ENCODE measurements at regions of chr19 and their contacts with region 1.

Region 1: GRCh38 chr19:49148784-49149651 is 6.2 kb downstream of the HRC start:
- H3K4me3 ChIP-seq: peak overlapping the region; percentile 69
- H3K27ac ChIP-seq: peak overlapping the region; percentile 70
- H3K4me1 ChIP-seq: peaks cover 6% of the 10 kb centered on the region
- CTCF ChIP-seq: no peak

Region 2: GRCh38 chr19:48982280-48982679 is 166.7 kb before region 1 on chr19:
- CTCF ChIA-PET with region 1: no interaction called
- POLR2A ChIA-PET with region 1: no interaction called
- H3K4me3 ChIP-seq: no peak overlapping the region
- H3K27ac ChIP-seq: no peak overlapping the region
- H3K4me1 ChIP-seq: no peaks in the 10 kb centered on the region
- CTCF ChIP-seq: no peak

Region 3: GRCh38 chr19:49106648-49107135 is 42.3 kb before region 1 on chr19:
- CTCF ChIA-PET with region 1: interaction called, 10 read pairs
- POLR2A ChIA-PET with region 1: interaction called, 5 read pairs
- H3K4me3 ChIP-seq: no peak overlapping the region
- H3K27ac ChIP-seq: no peak overlapping the region; the same call in 1 of the 2 replicates
- H3K4me1 ChIP-seq: no peaks in the 10 kb centered on the region
- CTCF ChIP-seq: peak; percentile 81

Region 4: DNA sequence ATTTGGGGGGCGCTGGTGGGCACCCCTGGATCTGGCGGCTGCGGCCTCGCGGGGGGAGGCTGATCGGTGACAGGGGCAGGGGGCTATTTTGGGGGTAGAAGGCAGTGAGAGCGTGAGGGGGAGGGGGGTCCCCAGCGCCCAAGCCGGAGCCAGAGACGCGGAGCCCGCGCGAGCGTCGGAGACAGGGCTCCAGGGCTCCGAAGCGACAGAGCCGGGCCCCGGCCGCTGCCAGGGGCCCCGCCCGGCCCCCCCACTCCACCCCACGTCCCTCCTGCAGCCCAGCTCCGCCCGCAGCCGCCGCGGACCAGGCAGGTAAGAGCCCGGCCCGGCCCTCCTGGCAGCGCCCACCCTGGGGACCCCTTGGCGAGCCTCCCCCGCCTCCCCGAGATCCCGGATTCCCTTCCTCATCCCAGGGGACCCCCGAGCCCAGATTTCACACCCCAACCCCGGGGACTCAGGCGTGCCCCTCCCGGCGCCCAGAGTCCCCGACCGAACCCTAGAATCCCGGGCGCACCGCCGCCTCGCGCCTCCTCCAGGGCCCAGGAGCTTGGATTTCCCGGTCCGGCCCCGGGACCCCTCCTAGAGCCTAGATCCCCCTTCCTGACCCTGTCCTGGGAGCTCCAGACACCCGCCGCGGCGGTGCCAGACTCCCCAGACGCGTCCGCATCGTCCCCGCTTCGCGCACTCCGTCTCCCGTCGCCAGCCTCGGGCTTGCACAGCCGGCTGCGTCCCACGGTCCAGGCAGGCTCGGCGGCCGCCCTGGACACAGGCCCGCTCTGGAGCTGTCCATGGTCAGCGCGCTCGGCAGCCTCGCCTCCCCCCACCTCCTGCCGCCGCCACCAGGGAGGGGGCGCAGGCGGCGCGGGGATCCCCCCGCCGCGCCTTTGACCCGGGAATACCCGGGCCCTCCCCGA is 29.4 kb before region 1 on chr19 and contains the start of gene PPFIA3:
- CTCF ChIA-PET with region 1: interaction called, 15 read pairs
- POLR2A ChIA-PET with region 1: interaction called, 22 read pairs
- H3K4me3 ChIP-seq: peak within 1 kb of the TSS; percentile 54
- H3K27ac ChIP-seq: peak within 1 kb of the TSS; percentile 82; the same call in 1 of the 2 replicates
- H3K4me1 ChIP-seq: peaks cover 8% of the 10 kb centered on the region
- CTCF ChIP-seq: no peak

Region 5: GRCh38 chr19:49136771-49137171 is 12.2 kb before region 1 on chr19:
- CTCF ChIA-PET with region 1: interaction called, 10 read pairs
- POLR2A ChIA-PET with region 1: interaction called, 17 read pairs
- H3K4me3 ChIP-seq: no peak overlapping the region
- H3K27ac ChIP-seq: no peak overlapping the region
- H3K4me1 ChIP-seq: no peaks in the 10 kb centered on the region
- CTCF ChIP-seq: no peak

Region 6: GRCh38 chr19:49272184-49272583 is 123.2 kb after region 1 on chr19:
- CTCF ChIA-PET with region 1: no interaction called
- POLR2A ChIA-PET with region 1: no interaction called
- H3K4me3 ChIP-seq: no peak overlapping the region
- H3K27ac ChIP-seq: no peak overlapping the region
- H3K4me1 ChIP-seq: peaks cover 4% of the 10 kb centered on the region; the same call in 1 of the 2 replicates
- CTCF ChIP-seq: no peak